Adrenal gland (tissue), 19 donors: ENCODE measurements at regions of chr21 and their contacts with region 1.

Region 1: DNA sequence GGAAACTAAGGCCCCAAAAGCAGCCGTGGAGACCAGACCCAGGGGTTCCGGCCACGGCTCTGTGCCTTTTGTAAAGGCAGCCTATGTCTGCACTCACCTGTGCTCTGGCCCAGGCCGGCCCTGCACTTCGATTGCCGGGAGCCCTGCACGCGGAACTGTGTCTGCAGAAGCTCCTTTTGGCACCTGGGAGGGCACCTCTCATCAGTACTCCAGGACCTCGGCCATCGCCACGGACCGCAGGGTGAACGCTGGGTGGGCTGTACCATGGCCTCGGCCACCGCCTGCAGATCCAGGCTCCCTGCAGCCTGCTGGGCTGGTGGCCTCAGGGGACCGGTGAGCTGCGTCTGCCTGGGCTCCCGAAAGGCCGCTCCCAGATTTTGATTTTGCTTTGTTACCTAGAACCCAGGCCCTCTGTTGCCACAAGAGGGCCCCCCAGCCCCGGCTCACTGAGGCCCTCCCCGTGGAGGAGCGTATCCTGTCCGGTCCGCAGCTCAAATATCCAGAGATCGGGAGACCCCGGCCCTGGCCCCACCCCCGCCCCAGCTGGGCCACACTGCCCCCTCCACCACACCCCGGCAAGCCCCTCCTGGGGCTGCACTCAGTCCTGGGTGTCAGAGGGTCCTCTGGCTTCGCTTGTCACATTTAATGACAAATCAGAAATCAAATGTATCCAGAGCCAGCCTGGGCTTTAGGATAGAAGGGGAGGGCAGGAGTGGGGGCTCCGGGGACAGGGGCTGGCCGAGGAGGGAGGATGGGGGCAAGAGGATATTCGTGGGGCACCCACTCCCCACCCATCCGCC is 60.2 kb upstream of the PDE9A start:
- DNase-seq: peak; percentile 61 to 85 (median 81)
- H3K4me3 ChIP-seq: peak overlapping the region in 1 of 4 donors; percentile 26
- H3K27ac ChIP-seq: no peak overlapping the region
- H3K4me1 ChIP-seq: no peaks in the 10 kb centered on the region
- H3K27me3 ChIP-seq: no peaks in the 10 kb centered on the region
- CTCF ChIP-seq: peak; percentile 61 to 85 (median 72)
- POLR2A ChIP-seq: no peak

Region 2: GRCh38 chr21:42454786-42455580 is 138.2 kb before region 1 on chr21:
- intact Hi-C with region 1: no loop called
- DNase-seq: no peak
- H3K4me3 ChIP-seq: no peak overlapping the region
- H3K27ac ChIP-seq: no peak overlapping the region
- H3K4me1 ChIP-seq: no peaks in the 10 kb centered on the region
- H3K27me3 ChIP-seq: no peaks in the 10 kb centered on the region
- CTCF ChIP-seq: no peak
- POLR2A ChIP-seq: no peak

Region 3: DNA sequence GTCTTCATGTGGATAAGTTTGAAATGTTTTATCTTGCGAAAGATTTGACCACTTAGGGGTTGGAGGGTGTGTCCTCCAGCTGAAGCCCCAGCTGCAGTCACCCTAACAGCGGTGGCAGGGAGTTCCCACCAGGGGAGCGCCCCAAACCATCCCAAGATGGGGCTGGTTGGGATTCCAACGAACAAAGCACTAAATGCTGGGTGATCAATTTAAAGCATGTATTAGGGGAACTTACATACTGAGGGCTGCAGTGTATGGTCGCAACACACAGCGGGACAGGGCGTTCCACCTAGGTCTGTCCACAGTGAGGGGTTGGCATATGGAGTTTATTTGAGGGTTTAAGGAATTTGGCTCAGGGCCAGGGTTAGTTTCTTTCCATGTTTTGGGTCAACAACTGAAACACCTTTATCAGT is 53.3 kb before region 1 on chr21:
- intact Hi-C with region 1: loop called in 1 of 2 experiments (anchors 10 kb)
- DNase-seq: peak in 1 of 7 donors; percentile 45
- H3K4me3 ChIP-seq: no peak overlapping the region
- H3K27ac ChIP-seq: no peak overlapping the region
- H3K4me1 ChIP-seq: no peaks in the 10 kb centered on the region
- H3K27me3 ChIP-seq: no peaks in the 10 kb centered on the region
- CTCF ChIP-seq: no peak
- POLR2A ChIP-seq: no peak

Region 4: DNA sequence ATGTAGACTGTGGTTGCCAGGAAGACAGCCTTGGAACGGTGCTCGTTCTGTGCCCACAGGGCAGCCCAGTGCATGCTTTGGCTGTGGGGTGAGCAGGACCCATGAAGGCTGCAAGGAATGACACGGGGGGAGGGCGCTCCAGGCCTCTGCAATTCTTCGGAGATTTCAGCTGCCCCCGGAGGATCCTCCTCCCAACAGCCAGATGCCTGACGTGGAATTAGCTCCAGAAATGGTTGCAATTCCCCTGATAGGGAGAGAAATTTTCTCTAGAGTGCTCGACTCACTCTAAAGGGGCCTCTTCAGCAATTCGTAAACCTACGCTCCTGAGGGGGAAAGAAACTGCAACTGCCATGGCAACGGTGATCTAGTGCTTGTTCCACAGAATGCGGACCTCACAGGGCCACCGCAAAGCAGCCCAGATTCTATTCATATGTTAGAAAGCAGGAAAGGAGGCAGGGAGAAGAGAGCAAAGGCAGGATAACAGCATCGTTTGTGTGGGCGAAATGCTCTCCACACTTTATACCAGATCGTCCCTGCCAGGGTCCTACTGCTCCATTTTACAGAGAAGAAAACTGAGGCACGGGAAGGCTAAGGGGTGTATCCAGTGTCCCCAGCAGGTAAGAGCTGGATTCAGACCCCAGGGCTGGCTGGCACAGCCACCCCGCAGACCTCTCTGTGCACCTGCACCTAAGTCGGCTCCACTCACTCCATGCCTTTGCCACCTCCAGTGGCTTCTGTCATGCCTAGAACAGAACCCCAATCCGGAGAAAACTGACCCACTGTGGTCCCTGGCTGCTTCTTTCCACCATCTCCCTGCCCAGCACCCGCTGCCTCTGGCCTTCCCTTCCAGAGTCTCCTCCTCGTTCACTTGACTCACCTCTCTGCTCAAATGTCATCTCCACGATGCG is 48.4 kb after region 1 on chr21:
- intact Hi-C with region 1: no loop called
- DNase-seq: peak in 6 of 7 donors; percentile 50 to 80 (median 60)
- H3K4me3 ChIP-seq: peak overlapping the region in 1 of 4 donors; percentile 29
- H3K27ac ChIP-seq: peak overlapping the region in 3 of 5 donors; percentile 43 to 78 (median 76)
- H3K4me1 ChIP-seq: peaks cover 16 to 39% of the 10 kb centered on the region in 2 donors
- H3K27me3 ChIP-seq: no peaks in the 10 kb centered on the region
- CTCF ChIP-seq: no peak
- POLR2A ChIP-seq: no peak

Region 5: DNA sequence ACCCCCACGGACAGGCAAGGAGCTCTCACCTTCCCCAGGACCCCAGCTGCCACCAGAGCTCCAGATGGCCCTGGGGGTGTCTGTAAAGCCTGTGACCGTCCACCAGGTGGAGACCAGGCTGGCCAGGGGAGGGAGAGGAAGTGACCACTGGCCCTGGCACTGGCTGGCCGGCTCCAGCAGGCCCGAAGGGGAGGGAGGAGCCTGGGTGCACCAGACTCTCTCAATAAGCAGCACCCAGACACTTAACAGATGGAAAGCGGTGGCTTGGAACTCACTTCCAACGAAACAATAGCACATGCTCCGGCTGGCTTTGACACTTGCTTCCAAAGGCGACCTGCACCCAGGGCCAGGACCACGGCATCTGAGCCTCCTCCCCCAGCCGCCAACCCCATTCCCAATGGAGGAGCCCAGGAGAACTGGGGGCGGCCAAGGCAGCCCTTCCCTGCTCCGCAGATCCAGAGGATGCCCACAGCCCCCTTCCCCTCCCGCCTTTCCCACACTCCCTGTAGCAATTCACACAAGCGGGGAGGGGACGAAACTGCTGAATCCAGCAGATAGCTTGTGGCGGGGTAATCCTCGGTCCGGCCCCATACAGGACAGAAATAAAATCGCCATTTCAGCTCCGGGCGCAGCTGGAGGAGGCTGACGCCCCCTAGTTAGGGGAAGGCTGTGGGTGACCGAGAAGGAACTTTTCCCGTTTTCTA is 59.5 kb after region 1 on chr21:
- intact Hi-C with region 1: loop called in 1 of 2 experiments (anchors 5 kb)
- DNase-seq: peak; percentile 63 to 93 (median 91)
- H3K4me3 ChIP-seq: peak overlapping the region in 2 of 4 donors; percentile 61 to 71
- H3K27ac ChIP-seq: peak overlapping the region in 4 of 5 donors; percentile 36 to 74 (median 54)
- H3K4me1 ChIP-seq: peaks cover 9 to 15% of the 10 kb centered on the region in 2 donors
- H3K27me3 ChIP-seq: no peaks in the 10 kb centered on the region
- CTCF ChIP-seq: peak; percentile 52 to 87 (median 78)
- POLR2A ChIP-seq: peak in 1 of 2 donors; percentile 52

Region 6: DNA sequence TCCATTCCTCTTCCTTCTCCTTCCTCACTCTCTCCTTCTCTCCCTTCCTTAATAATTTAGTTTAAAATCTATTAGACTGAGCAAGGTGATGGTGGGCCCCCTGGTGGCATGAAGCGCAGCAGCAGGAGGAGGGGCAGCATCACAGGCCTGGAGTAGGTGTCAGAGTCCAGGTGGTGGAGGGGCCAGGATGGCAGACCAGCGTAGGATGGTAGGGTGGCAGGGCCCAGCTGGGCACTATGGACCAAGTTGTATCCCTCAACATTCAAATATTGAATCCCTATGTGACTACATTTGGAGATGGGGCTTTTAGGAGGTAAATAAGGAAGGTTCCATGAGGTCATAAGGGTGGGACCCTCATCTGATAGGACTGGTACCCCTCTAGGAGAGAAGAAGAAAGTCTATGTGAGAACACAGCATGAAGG is 225.1 kb after region 1 on chr21:
- intact Hi-C with region 1: loop called (anchors 2 to 5 kb)
- DNase-seq: peak; percentile 59 to 89 (median 72)
- H3K4me3 ChIP-seq: no peak overlapping the region
- H3K27ac ChIP-seq: no peak overlapping the region
- H3K4me1 ChIP-seq: no peaks in the 10 kb centered on the region
- H3K27me3 ChIP-seq: no peaks in the 10 kb centered on the region
- CTCF ChIP-seq: peak; percentile 71 to 93 (median 90)
- POLR2A ChIP-seq: no peak